Aorta (tissue), 5 donors: ENCODE measurements at regions of chr2 and their contacts with region 1.

Region 1: DNA sequence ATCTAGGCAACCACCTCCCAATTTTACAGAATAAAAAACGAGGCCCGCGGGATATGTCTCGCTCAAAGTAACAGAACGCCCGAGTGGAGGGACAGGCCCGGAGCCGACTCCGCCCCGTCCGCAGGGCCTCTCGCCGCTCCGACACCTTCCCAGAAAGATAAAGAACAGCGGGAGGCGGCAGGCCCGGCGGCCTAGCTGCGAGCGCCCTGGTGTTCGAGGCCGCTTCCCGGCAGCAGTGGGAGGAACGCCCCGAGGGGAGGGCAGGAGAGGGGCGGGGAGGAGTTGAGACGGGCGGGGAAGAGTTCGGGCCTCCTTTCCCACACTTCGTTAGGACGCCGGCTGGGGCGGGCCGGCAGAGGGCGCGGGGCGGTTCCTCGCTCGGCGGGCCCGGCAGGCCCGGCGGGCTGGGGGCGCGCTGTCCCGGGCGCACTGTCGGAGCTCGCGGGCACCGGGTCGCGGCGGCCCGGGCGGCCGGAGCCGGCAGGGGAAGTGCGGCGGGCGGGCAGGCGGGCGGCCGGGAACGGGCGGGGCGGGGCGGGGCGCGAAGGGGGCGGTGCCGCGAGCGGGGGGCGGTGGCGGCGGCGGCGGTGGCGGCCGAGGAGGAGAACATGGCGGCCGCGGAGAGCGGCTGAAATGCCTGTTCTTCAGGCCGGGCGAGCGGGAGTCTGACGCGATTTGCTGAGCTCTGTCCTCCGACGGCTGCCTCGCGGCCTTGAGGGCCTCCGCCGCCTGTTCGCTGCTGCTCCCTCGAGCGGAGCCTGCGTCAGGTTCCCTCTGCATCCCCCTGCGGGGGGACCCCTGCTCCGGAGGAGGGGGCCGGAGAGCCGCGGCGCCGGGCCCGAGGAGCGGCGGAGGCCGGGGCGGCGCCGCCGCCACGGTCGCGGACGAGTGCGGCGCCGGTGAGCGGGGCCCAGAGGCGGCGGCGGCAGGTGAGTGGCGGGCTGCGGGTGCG is at the start of gene NCOA1:
- DNase-seq: peak; percentile 94 to 95
- ATAC-seq: peak; percentile 95
- H3K4me3 ChIP-seq: peak within 1 kb of the TSS; percentile 91 to 99
- H3K27ac ChIP-seq: peak within 1 kb of the TSS; percentile 78 to 82
- H3K4me1 ChIP-seq: peaks cover 0 to 3% of the 10 kb centered on the region in 2 donors
- H3K27me3 ChIP-seq: no peaks in the 10 kb centered on the region
- total RNA-seq, gene NCOA1: 41.6 to 68.1 TPM

Region 2: DNA sequence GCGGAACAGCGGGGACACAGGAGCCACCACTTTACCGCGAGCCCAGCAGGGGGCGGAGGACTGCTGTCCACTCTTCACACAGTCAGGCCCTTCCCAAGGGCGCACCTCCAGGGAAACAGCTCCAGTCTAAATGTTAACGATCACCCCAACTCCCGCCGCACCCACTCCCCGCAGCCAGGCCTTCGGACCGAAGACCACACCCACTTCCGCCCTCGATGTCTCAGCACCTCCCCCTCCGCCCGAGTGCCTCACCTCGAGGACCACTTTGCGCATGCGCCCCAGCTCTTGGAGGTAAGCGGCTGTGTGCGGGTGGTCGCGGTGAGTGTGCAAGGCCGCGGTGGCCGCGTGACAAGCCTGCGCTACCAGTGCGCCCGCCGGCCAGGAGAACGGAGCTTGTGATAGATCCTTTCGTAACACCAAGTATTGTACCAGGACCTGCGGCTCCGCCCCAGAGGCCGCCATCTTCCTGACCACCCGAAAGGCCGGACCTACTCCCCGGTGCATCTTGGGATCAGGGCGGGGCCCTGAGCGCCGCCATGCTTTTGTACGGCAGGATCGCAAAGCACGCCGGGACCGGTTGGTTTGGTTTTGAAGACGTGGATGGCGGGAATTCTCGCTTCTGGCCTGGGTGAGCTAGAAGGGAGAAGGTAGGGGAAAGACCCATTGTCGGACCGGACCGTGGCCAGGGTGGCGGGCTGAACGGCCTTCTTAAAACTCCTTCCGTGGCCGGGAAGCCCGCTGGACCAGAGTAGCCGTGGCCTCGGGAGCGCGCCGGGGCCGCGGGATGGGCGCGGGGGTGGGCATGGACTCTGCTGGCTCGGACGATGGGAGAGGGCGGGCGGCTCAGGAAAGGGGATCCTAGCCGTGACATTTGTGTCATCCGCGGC is 302.2 kb after region 1 on chr2 and contains the starts of genes CENPO and PTRHD1:
- intact Hi-C with region 1: loop called in 1 of 2 experiments (anchors 5 kb)
- DNase-seq: peak; percentile 98
- ATAC-seq: peak; percentile 100
- H3K4me3 ChIP-seq: peak within 1 kb of the TSS; percentile 23 to 52
- H3K27ac ChIP-seq: peak within 1 kb of the TSS in 1 of 2 donors; percentile 62
- H3K4me1 ChIP-seq: no peaks in the 10 kb centered on the region
- H3K27me3 ChIP-seq: no peaks in the 10 kb centered on the region
- total RNA-seq, gene CENPO: 3.6 to 4.0 TPM
- total RNA-seq, gene PTRHD1: 8.5 to 16.9 TPM

Region 3: DNA sequence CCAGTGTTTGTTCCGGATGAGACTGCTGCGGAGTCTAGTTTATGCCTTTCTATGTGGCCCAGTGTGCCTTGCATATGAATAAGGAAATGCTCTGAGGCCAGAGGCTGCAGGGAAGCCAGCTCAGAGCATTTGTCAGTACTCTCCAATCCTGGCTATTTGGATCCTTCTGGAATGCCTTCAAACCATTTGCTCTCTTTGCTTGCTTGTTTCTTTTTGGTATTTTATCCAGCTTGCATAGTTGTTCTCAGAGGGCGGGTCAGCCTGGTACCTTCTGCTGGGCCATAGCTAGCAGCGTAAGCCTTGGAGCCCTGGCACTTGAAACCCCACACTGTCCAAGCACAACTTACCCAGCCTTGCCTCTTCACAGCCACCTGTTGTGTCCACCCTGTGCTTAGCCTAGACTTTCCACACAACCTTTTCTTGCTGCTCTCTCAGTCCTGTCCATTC is 322.8 kb after region 1 on chr2:
- intact Hi-C with region 1: no loop called
- DNase-seq: peak in 1 of 2 donors; percentile 28
- ATAC-seq: no peak
- H3K4me3 ChIP-seq: no peak overlapping the region
- H3K27ac ChIP-seq: no peak overlapping the region
- H3K4me1 ChIP-seq: no peaks in the 10 kb centered on the region
- H3K27me3 ChIP-seq: no peaks in the 10 kb centered on the region